ENCODE measurements at regions of chr5 and their contacts with region 1.

Region 1: DNA sequence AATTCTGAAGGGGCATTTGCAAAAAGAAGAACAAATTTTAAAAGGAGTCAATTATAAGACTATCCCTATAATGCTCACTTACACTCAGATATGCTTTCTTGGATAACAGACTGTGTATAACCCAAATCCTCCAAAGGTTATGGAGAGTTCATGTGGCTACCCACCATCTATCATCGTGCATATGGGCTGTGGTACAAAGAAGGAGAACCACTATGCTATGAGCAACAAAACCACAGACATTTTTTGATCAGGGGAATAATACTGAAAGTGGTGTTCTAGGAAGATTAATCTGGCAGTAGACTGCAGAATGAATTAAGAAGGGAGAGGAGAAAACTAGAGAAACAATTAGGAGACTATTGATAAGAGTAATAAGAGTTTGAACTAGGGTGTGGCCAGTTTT is 16.8 kb downstream of the NR3C1 start:
- DNase-seq: no peak
- ATAC-seq: no peak
- H3K4me3 ChIP-seq: no peak overlapping the region
- H3K27ac ChIP-seq: no peak overlapping the region
- H3K4me1 ChIP-seq: peaks cover 6% of the 10 kb centered on the region; the same call in 1 of the 2 replicates
- H3K27me3 ChIP-seq: no peaks in the 10 kb centered on the region
- CTCF ChIP-seq: no peak

Region 2: DNA sequence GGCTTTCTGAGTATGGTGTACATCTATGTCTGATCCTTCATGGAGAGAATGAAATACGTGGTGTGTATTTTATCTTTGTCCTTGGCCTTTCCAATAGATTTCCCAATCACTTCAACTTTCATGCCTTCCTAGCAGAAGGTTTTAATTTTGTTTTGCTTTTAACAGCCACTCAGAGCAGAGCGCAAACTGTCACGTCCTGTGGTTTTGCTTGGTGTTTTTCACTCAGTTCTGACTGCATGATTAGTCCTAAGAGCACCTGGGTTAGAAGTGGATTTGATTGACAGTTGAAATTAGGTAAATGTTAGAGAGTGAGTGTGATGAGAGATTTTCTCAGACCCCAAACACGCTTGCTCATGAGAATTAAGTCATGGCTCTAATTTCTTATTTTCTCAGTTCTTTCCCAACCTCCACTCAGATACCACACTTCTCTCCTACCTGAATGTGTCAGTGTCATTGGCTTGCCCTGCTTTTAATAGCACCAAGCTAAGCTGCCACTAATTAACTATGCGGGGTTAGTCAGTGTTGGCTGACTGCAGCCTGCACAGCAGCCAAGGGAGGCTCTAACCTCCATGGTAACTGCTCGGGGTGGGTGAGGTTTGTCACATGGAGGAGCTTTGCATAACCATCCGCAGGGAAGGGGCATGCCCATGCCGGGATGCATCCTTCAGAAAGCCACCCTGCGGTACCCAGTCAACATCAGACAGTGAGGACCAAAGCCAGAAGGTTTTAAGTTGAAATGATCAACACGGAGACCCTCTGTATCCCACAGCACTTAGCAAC is 156.6 kb before region 1 on chr5:
- CTCF ChIA-PET with region 1: no interaction called
- POLR2A ChIA-PET with region 1: no interaction called
- in situ Hi-C with region 1: no loop called
- intact Hi-C with region 1: no loop called
- DNase-seq: no peak
- ATAC-seq: peak; percentile 35
- H3K4me3 ChIP-seq: no peak overlapping the region
- H3K27ac ChIP-seq: peak overlapping the region; percentile 64; the same call in 1 of the 2 replicates
- H3K4me1 ChIP-seq: peaks cover 8% of the 10 kb centered on the region
- H3K27me3 ChIP-seq: no peaks in the 10 kb centered on the region
- CTCF ChIP-seq: no peak

Region 3: GRCh38 chr5:143319437-143320227 is 67.1 kb before region 1 on chr5:
- CTCF ChIA-PET with region 1: no interaction called
- POLR2A ChIA-PET with region 1: no interaction called
- in situ Hi-C with region 1: no loop called
- intact Hi-C with region 1: no loop called
- DNase-seq: no peak
- ATAC-seq: no peak
- H3K4me3 ChIP-seq: no peak overlapping the region
- H3K27ac ChIP-seq: no peak overlapping the region
- H3K4me1 ChIP-seq: peaks cover 22% of the 10 kb centered on the region
- H3K27me3 ChIP-seq: no peaks in the 10 kb centered on the region
- CTCF ChIP-seq: no peak

Region 4: DNA sequence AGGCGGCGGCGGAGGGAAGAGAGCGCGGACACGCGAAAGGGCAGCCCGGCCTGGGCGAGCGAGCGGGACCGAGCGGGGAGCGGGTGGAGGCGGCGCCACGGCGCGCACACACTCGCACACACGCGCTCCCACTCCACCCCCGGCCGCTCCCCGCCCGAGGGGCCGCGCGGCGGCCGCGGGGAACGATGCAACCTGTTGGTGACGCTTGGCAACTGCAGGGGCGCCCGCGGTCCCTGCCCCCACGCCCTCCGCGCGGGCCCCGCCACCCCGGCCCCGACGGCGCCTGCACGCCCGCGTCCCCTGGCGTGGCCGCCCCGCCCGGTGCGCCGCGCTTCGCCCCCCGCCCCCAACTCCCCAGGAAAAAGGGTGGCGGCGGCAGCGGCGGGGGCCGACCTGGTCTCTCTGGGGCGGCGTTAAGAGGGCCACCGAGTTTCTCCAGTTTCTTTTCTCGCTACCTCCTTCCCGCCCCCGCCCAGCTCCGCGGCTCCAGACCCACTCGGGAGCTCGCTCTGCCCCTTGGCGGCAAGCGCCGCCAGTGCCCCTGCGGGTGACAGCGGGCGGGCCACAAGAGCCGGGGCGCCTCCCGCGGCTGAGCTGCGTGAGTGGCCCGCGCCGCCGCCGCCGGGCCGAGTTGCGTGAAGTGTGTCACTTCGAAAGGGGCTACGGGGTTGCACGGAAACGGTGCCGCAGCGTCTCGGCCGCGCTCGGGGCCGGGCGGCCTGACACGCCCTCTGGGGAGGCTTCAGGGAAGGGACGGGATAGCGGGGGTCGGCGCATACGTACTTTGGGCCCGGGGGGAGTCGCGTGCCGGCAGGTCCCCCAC is 17.1 kb after region 1 on chr5 and contains the start of gene NR3C1:
- CTCF ChIA-PET with region 1: no interaction called
- POLR2A ChIA-PET with region 1: interaction called, 10 read pairs
- in situ Hi-C with region 1: no loop called
- intact Hi-C with region 1: no loop called
- DNase-seq: no peak
- ATAC-seq: peak; percentile 80
- H3K4me3 ChIP-seq: peak within 1 kb of the TSS; percentile 91
- H3K27ac ChIP-seq: peak within 1 kb of the TSS; percentile 100
- H3K4me1 ChIP-seq: peaks cover 20% of the 10 kb centered on the region
- H3K27me3 ChIP-seq: no peaks in the 10 kb centered on the region; the same call in 1 of the 2 replicates
- CTCF ChIP-seq: peak; percentile 89
- total RNA-seq, gene NR3C1: 52.6 TPM

Region 5: DNA sequence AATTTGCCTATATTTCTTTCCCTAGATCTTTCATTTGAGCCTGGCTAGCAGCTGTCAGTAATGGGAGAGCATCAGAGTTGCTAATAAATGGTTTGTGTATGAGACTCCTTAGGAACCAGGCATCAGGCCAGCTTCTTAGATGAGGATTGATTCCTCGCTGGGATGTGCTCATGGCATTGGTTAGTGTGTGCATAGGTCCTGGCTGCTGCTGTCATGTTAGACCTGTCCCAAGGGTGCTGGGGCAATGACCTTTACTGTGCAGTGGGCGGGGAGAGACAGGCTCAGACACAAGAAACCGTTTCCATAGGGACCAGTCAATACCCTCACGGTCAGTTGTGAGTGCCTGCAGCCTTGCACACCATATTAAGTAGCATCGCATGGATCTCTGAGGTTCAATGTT is 129.1 kb after region 1 on chr5:
- CTCF ChIA-PET with region 1: no interaction called
- POLR2A ChIA-PET with region 1: no interaction called
- in situ Hi-C with region 1: no loop called
- intact Hi-C with region 1: no loop called
- DNase-seq: no peak
- ATAC-seq: no peak
- H3K4me3 ChIP-seq: no peak overlapping the region
- H3K27ac ChIP-seq: no peak overlapping the region
- H3K4me1 ChIP-seq: no peaks in the 10 kb centered on the region
- H3K27me3 ChIP-seq: peaks cover 3% of the 10 kb centered on the region; the same call in 1 of the 2 replicates
- CTCF ChIP-seq: no peak

Measured in Panc1 (cell line).